ENCODE measurements at regions of chr11 and their contacts with region 1.

Region 1: DNA sequence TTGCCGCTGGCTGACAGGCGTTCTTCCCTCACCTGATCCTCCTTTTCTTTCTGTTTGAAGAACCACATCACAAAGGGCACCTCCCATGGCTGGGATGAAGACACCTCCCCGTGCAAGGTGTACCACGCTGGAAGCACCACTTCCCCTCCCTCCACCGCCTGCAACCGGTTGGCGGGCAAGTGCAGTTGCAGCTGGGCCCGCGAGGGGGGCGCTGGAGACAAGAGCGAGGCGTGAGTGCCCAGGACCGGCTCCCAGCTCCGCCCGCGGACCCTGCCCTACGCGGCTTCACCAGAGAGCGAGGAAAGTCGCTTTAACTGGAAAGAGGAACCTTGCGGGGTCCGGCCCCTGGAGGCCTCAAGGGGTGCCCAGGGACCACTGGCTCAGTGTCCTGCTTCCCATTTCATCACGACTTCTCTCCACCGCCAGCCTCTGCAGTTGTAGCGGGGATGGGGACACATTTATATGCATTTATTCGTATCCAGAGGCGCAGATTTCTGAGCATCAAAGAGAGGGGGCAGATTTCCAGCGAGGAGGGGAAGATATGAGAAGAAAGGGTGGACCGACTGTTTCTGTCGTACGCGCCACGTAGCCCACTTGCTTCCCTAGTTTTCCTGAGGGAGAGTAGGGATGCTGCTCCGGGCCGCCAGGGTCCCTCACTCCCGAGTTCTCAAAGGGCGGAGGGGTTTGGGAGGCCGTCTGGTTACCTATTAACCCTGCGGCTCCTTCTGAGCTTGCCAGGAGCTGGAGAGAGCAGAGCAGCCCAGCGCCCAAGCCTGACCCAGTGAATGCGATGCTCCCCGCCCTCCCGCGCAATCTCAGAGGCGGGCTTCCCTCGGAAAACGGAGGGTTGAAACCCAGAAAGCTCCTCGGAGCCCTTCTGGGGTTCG is 3.5 kb downstream of the ESAM start:
- DNase-seq: peak; percentile 84
- ATAC-seq: peak; percentile 85
- H3K4me3 ChIP-seq: peak overlapping the region; percentile 49 to 69 (median 58)
- H3K27ac ChIP-seq: no peak overlapping the region
- H3K4me1 ChIP-seq: peaks cover 56% of the 10 kb centered on the region
- H3K27me3 ChIP-seq: peaks cover 0 to 24% of the 10 kb centered on the region in 2 experiments; a peak in 4 of 5 replicates
- CTCF ChIP-seq: peak; percentile 91
- EP300 ChIP-seq: no peak
- POLR2A ChIP-seq: 0 out of 4 replicates have a peak, but pooled peaks of 1 of the 2 experiments have one; percentile 25
- RAD21 ChIP-seq: peak; percentile 80

Region 2: DNA sequence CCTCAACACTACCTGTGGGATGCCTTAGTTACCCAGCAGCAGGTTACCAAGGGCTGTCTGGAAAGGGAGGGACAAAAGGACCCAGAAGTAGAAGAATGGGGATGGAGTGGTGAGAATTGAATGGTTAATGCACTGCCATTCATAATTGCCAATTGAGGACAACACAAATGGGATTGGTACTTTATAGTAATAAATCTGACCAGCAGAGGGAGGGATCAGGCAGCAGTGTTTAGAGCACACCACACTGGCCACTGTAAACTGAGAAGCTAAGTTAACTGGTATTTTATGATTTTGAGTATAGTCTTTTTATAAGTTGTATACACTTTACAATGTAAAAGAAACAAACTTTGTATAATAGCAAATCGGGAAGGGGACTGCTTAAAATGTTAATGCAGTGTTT is 125.2 kb before region 1 on chr11:
- CTCF ChIA-PET with region 1: no interaction called
- POLR2A ChIA-PET with region 1: no interaction called
- in situ Hi-C with region 1: no loop called
- intact Hi-C with region 1: no loop called
- DNase-seq: no peak
- ATAC-seq: peak; percentile 87
- H3K4me3 ChIP-seq: no peak overlapping the region
- H3K27ac ChIP-seq: no peak overlapping the region
- H3K4me1 ChIP-seq: no peaks in the 10 kb centered on the region
- H3K27me3 ChIP-seq: no peaks in the 10 kb centered on the region
- CTCF ChIP-seq: no peak
- EP300 ChIP-seq: no peak
- POLR2A ChIP-seq: no peak
- RAD21 ChIP-seq: no peak

Region 3: GRCh38 chr11:124673333-124674167 is 85.0 kb before region 1 on chr11 and contains the starts of genes SIAE and SPA17:
- CTCF ChIA-PET with region 1: interaction called, 19 read pairs
- POLR2A ChIA-PET with region 1: interaction called, 13 read pairs
- in situ Hi-C with region 1: loop called (anchors 5 kb)
- intact Hi-C with region 1: loop called (anchors 1 kb)
- DNase-seq: peak; percentile 91
- ATAC-seq: peak; percentile 97
- H3K4me3 ChIP-seq: peak within 1 kb of the TSS; percentile 73 to 99 (median 99)
- H3K27ac ChIP-seq: peak within 1 kb of the TSS; percentile 74
- H3K4me1 ChIP-seq: peaks cover 19% of the 10 kb centered on the region
- H3K27me3 ChIP-seq: no peaks in the 10 kb centered on the region; a peak in 1 of 5 replicates
- CTCF ChIP-seq: no peak
- EP300 ChIP-seq: 0 out of 4 replicates have a peak, but pooled peaks of 1 of the 2 experiments have one; percentile 38
- POLR2A ChIP-seq: peak; percentile 73 to 87
- RAD21 ChIP-seq: peak; percentile 21; the same call in 1 of the 2 replicates
- total RNA-seq, gene SIAE: 4.5 and 7.0 TPM in 2 replicates
- total RNA-seq, gene SPA17: 8.4 and 12.7 TPM in 2 replicates

Region 4: DNA sequence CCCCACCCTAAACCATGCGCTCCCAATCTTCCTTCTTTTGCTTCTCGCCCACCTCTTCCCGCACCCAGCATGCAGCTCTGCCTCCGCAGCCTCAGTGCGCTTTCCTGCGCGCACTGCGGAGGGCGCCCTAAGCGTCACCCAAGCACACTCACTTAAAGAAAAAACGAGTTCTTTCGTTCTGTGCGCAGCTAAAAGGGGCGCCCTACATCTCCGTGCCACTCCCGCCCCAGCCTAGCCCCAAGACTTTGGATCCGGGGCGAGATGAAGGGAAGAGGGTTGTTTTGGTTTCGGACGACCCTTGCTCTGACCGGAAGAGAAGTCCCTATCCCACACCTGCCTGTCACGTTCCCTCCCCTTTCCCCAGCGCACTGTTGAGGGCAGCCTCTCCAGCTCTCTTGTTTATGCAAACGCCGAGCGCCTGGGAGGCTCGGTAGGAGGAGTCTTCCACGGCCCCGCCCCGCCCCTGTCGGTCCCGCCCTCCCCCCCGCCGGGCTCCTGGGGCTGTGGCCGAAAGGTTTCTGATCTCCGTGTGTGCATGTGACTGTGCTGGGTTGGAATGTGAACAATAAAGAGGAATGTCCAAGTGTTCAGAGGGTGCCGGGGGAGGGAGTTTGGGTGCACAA is 11.8 kb before region 1 on chr11:
- CTCF ChIA-PET with region 1: interaction called, 8 read pairs
- POLR2A ChIA-PET with region 1: interaction called, 48 read pairs
- in situ Hi-C with region 1: no loop called
- intact Hi-C with region 1: loop called (anchors 1 kb)
- DNase-seq: peak; percentile 89
- ATAC-seq: peak; percentile 90
- H3K4me3 ChIP-seq: peak overlapping the region; percentile 70 to 86 (median 78)
- H3K27ac ChIP-seq: peak overlapping the region; percentile 51
- H3K4me1 ChIP-seq: peaks cover 45% of the 10 kb centered on the region
- H3K27me3 ChIP-seq: peaks cover 0 to 71% of the 10 kb centered on the region in 2 experiments; a peak in 3 of 5 replicates
- CTCF ChIP-seq: peak; percentile 81
- EP300 ChIP-seq: no peak
- POLR2A ChIP-seq: peak; percentile 55 to 69; a peak in 3 of 4 replicates
- RAD21 ChIP-seq: peak; percentile 55

Region 5: DNA sequence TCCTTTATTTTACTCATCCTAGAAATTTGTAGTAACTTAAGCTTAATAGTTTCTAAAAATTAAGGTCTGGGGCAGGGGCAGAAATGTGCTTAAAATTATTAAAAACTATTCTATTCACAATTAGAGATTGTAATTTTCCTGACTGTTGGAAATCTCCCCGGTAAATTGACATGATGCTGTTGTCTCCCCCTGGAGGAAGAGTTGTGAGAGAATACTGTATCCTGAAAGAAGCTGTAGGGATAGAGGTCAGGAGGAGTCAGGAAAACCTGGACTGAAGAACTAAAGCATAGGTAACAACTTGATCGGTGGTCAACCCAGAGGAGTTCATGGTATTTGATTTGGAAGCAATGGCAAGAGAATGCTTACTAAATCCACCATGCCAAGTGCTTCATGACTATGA is 19.7 kb after region 1 on chr11:
- CTCF ChIA-PET with region 1: interaction called, 12 read pairs
- POLR2A ChIA-PET with region 1: no interaction called
- in situ Hi-C with region 1: no loop called
- intact Hi-C with region 1: loop called (anchors 2 kb)
- DNase-seq: no peak
- ATAC-seq: no peak
- H3K4me3 ChIP-seq: no peak overlapping the region
- H3K27ac ChIP-seq: no peak overlapping the region
- H3K4me1 ChIP-seq: no peaks in the 10 kb centered on the region
- H3K27me3 ChIP-seq: no peaks in the 10 kb centered on the region
- CTCF ChIP-seq: no peak
- EP300 ChIP-seq: no peak
- POLR2A ChIP-seq: no peak
- RAD21 ChIP-seq: no peak

Region 6: DNA sequence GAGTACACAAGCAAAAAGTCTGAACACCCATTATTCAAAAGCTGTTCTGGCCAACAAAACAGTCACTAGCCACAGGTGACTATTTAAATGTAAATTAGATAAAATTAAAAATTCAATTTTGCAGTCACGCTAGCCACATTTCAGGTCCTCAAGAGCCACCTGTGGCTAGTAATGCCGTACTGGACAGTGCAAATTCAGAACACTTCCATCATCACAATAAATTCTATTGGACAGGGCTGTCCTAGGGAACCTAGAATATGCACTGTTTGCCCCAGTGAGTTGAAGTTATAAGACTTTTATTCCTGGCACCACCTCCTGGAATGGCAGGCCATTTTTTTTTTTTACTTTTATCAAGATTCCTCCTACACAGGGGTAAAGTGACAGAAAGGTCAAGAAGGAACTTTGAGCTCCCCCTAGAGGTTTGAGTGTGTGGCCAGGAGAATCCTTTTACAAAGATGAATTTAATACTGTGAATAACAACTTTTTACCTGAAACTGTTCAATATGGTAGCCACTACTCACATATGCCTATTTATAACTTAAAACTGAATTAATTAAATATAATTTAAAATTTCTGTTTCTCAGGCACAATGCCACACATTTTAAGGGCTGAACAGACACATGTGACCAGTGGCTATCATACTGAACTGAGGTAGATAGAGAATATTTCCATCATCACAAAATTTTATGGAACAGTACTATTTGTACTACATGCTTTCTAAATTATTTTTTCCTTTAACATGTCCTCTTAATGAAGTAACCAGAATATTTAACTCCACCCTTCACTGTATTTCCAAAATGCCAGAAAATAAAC is 35.1 kb after region 1 on chr11:
- CTCF ChIA-PET with region 1: interaction called, 14 read pairs
- POLR2A ChIA-PET with region 1: interaction called, 5 read pairs
- in situ Hi-C with region 1: no loop called
- intact Hi-C with region 1: loop called (anchors 1 kb)
- DNase-seq: peak; percentile 51
- ATAC-seq: peak; percentile 69
- H3K4me3 ChIP-seq: no peak overlapping the region
- H3K27ac ChIP-seq: no peak overlapping the region
- H3K4me1 ChIP-seq: peaks cover 37% of the 10 kb centered on the region
- H3K27me3 ChIP-seq: no peaks in the 10 kb centered on the region
- CTCF ChIP-seq: peak; percentile 61
- EP300 ChIP-seq: no peak
- POLR2A ChIP-seq: no peak
- RAD21 ChIP-seq: no peak

Region 7: GRCh38 chr11:124800226-124800929 is 41.8 kb after region 1 on chr11 and contains the start of gene MSANTD2:
- CTCF ChIA-PET with region 1: no interaction called
- POLR2A ChIA-PET with region 1: interaction called, 12 read pairs
- in situ Hi-C with region 1: no loop called
- intact Hi-C with region 1: no loop called
- DNase-seq: peak; percentile 46
- ATAC-seq: peak; percentile 98
- H3K4me3 ChIP-seq: peak within 1 kb of the TSS; percentile 94 to 96 (median 96)
- H3K27ac ChIP-seq: peak within 1 kb of the TSS; percentile 88
- H3K4me1 ChIP-seq: peaks cover 46% of the 10 kb centered on the region
- H3K27me3 ChIP-seq: no peaks in the 10 kb centered on the region; a peak in 1 of 5 replicates
- CTCF ChIP-seq: no peak; the same call in 1 of the 2 replicates
- EP300 ChIP-seq: peak in 1 of 2 experiments; percentile 10; a peak in 1 of 4 replicates
- POLR2A ChIP-seq: peak; percentile 83 to 96
- RAD21 ChIP-seq: no peak
- total RNA-seq, gene MSANTD2: 6.8 and 10.1 TPM in 2 replicates

Region 8: DNA sequence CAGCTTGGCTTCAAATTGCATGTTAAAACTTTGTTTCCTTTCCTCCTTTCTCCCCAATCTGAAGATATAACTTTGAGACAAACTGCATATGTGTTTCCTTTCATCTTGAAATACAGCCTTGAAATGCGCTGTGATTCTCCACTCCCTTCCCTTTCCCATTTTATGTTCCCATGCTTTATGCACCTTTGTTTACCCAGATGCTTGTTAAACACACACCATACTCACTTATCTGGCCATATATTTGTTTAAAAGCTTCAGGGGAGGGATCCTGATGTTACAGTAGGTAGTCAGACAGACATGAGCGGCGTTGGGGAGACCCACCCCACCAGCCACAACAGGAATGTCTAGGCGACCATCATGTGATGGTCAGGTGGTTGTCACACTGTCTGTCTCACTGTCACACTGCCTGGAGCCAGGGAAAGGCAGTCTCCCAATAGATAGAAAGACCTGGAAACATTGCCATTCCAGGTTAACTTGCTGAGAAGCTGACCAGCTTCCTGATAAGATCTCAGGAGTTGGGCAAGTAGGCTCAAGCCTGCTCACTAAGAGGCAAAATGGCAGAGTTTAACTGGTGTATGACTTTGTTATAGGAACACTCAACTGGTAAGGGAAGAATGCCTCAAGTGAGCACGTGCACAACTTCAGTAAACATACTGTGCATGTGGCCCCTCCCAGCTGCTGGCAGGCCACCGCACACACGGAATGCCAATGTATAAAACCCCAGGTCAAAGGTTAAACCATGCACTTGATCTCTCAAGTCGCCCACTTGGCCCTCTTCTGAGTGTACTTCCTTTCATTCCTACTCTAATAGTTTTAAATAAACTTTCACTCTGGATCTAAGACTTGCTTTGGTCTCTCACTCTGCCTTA is 65.2 kb after region 1 on chr11:
- CTCF ChIA-PET with region 1: no interaction called
- POLR2A ChIA-PET with region 1: no interaction called
- in situ Hi-C with region 1: no loop called
- intact Hi-C with region 1: no loop called
- DNase-seq: no peak
- ATAC-seq: no peak
- H3K4me3 ChIP-seq: no peak overlapping the region
- H3K27ac ChIP-seq: no peak overlapping the region
- H3K4me1 ChIP-seq: peaks cover 12% of the 10 kb centered on the region
- H3K27me3 ChIP-seq: peaks cover 3 to 34% of the 10 kb centered on the region in 2 experiments
- CTCF ChIP-seq: no peak
- EP300 ChIP-seq: no peak
- POLR2A ChIP-seq: no peak
- RAD21 ChIP-seq: no peak

Region 9: GRCh38 chr11:124837491-124837856 is 78.9 kb after region 1 on chr11:
- CTCF ChIA-PET with region 1: interaction called, 14 read pairs
- POLR2A ChIA-PET with region 1: no interaction called
- in situ Hi-C with region 1: no loop called
- intact Hi-C with region 1: loop called (anchors 1 kb)
- DNase-seq: peak; percentile 58
- ATAC-seq: peak; percentile 57
- H3K4me3 ChIP-seq: no peak overlapping the region
- H3K27ac ChIP-seq: no peak overlapping the region
- H3K4me1 ChIP-seq: peaks cover 32% of the 10 kb centered on the region
- H3K27me3 ChIP-seq: peaks cover 11 to 55% of the 10 kb centered on the region in 2 experiments
- CTCF ChIP-seq: peak; percentile 71
- EP300 ChIP-seq: no peak
- POLR2A ChIP-seq: no peak
- RAD21 ChIP-seq: no peak

Region 10: GRCh38 chr11:124941703-124942102 is 183.1 kb after region 1 on chr11:
- CTCF ChIA-PET with region 1: no interaction called
- POLR2A ChIA-PET with region 1: no interaction called
- in situ Hi-C with region 1: no loop called
- intact Hi-C with region 1: no loop called
- DNase-seq: no peak
- ATAC-seq: no peak
- H3K4me3 ChIP-seq: no peak overlapping the region
- H3K27ac ChIP-seq: peak overlapping the region; percentile 89
- H3K4me1 ChIP-seq: peaks cover 90% of the 10 kb centered on the region
- H3K27me3 ChIP-seq: no peaks in the 10 kb centered on the region
- CTCF ChIP-seq: no peak
- EP300 ChIP-seq: no peak
- POLR2A ChIP-seq: no peak
- RAD21 ChIP-seq: no peak

Measured in HepG2 (cell line).